ENCODE measurements at regions of chr15 and their contacts with region 1.

Region 1: DNA sequence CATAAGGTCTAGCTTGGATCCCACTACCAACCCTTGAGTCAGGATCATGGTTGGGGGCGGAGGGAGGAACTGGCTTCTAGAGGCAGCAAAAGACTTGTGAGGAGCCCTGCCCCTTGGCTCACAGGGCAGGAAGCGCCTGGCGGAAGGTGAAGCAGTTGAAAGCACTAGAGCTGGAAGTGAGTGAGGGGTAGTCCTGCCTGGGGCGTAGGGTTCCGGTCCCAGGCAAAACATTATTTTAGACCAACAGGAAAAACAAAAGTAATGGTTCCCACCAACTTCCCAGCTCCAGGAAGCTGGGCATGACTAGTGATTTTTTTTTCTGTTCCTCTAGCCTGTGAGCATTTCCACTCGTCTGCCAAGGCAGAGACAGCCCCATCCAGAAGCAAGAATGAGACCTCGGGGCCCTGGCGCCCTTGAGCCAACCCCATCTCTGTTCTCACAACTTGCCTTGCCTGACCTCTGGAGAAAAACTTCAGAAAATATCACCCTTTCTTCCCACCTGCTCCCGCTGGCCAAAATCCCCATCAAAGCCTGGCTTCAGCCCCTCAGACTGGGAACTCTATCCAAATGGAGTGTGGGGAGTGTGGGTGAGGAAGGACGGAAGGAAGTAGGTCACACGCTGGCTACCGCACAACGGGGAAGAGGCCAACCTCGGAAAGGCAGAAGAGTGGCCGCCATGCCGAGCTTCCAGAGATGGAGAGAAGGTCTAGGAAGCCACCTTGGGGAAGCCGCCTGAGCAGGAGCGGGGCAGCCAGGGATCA is 57.5 kb downstream of the RBPMS2 start:
- DNase-seq: peak in 8 of 14 experiments; percentile 11 to 59 (median 28)
- ATAC-seq: peak; percentile 64
- H3K4me3 ChIP-seq: no peak overlapping the region
- H3K4me3 Mint-ChIP-seq: no peak overlapping the region
- H3K27ac ChIP-seq: peak overlapping the region; percentile 15 to 38
- H3K27ac Mint-ChIP-seq: peak overlapping the region; percentile 74
- H3K4me1 ChIP-seq: peaks cover 18% of the 10 kb centered on the region
- H3K4me1 Mint-ChIP-seq: peaks cover 24% of the 10 kb centered on the region
- H3K27me3 ChIP-seq: no peaks in the 10 kb centered on the region
- H3K27me3 Mint-ChIP-seq: no peaks in the 10 kb centered on the region
- CTCF ChIP-seq: no peak

Region 2: GRCh38 chr15:64702816-64703646 is 14.9 kb before region 1 on chr15:
- CTCF ChIA-PET with region 1: no interaction called
- POLR2A ChIA-PET with region 1: interaction called, 11 read pairs
- intact Hi-C with region 1: no loop called
- DNase-seq: peak; percentile 91 to 98 (median 94)
- ATAC-seq: peak; percentile 96
- H3K4me3 ChIP-seq: peak overlapping the region; percentile 91
- H3K4me3 Mint-ChIP-seq: peak overlapping the region; percentile 85
- H3K27ac ChIP-seq: peak overlapping the region; percentile 60 to 75
- H3K27ac Mint-ChIP-seq: peak overlapping the region; percentile 62
- H3K4me1 ChIP-seq: peaks cover 54% of the 10 kb centered on the region
- H3K4me1 Mint-ChIP-seq: peaks cover 58% of the 10 kb centered on the region
- H3K27me3 ChIP-seq: no peaks in the 10 kb centered on the region
- H3K27me3 Mint-ChIP-seq: no peaks in the 10 kb centered on the region
- CTCF ChIP-seq: no peak

Region 3: GRCh38 chr15:64905119-64905831 is 187.4 kb after region 1 on chr15:
- CTCF ChIA-PET with region 1: no interaction called
- POLR2A ChIA-PET with region 1: no interaction called
- intact Hi-C with region 1: no loop called
- DNase-seq: peak; percentile 63 to 88 (median 74)
- ATAC-seq: peak; percentile 74
- H3K4me3 ChIP-seq: peak overlapping the region; percentile 24
- H3K4me3 Mint-ChIP-seq: peak overlapping the region; percentile 79
- H3K27ac ChIP-seq: no peak overlapping the region
- H3K27ac Mint-ChIP-seq: no peak overlapping the region
- H3K4me1 ChIP-seq: peaks cover 36% of the 10 kb centered on the region
- H3K4me1 Mint-ChIP-seq: peaks cover 46% of the 10 kb centered on the region
- H3K27me3 ChIP-seq: peaks cover 0 to 3% of the 10 kb centered on the region in 2 experiments
- H3K27me3 Mint-ChIP-seq: peaks cover 16% of the 10 kb centered on the region
- CTCF ChIP-seq: peak; percentile 94

Measured in CD4-positive, alpha-beta T cell (primary cell).